ENCODE measurements at regions of chr22 and their contacts with region 1.

Region 1: GRCh38 chr22:22884010-22884887 is 3.4 kb upstream of the IGLL5 start:
- DNase-seq: peak; percentile 57 to 100 (median 78)
- ATAC-seq: peak; percentile 94
- H3K4me3 ChIP-seq: no peak overlapping the region
- H3K27ac ChIP-seq: no peak overlapping the region
- H3K4me1 ChIP-seq: peaks cover 0 to 9% of the 10 kb centered on the region in 2 experiments; a peak in 1 of 5 replicates
- H3K27me3 ChIP-seq: peaks cover 0 to 46% of the 10 kb centered on the region in 2 experiments; a peak in 2 of 5 replicates
- CTCF ChIP-seq: no peak
- EP300 ChIP-seq: no peak
- POLR2A ChIP-seq: no peak
- RAD21 ChIP-seq: no peak

Region 2: GRCh38 chr22:22422629-22423112 is 461.6 kb before region 1 on chr22:
- CTCF ChIA-PET with region 1: interaction called, 6 read pairs
- POLR2A ChIA-PET with region 1: interaction called, 5 read pairs
- in situ Hi-C with region 1: no loop called
- intact Hi-C with region 1: loop called (anchors 5 kb)
- DNase-seq: peak; percentile 85 to 96 (median 89)
- ATAC-seq: peak; percentile 92
- H3K4me3 ChIP-seq: no peak overlapping the region
- H3K27ac ChIP-seq: no peak overlapping the region
- H3K4me1 ChIP-seq: no peaks in the 10 kb centered on the region
- H3K27me3 ChIP-seq: peaks cover 31 to 34% of the 10 kb centered on the region in 2 experiments
- CTCF ChIP-seq: peak in 1 of 3 experiments; percentile 99; a peak in 2 of 6 replicates
- EP300 ChIP-seq: no peak
- POLR2A ChIP-seq: no peak
- RAD21 ChIP-seq: no peak

Region 3: GRCh38 chr22:22710719-22711531 is 173.3 kb before region 1 on chr22:
- CTCF ChIA-PET with region 1: interaction called, 28 read pairs
- POLR2A ChIA-PET with region 1: interaction called, 8 read pairs
- in situ Hi-C with region 1: no loop called
- intact Hi-C with region 1: loop called (anchors 1 kb)
- DNase-seq: peak; percentile 93 to 100 (median 99)
- ATAC-seq: peak; percentile 88
- H3K4me3 ChIP-seq: no peak overlapping the region
- H3K27ac ChIP-seq: no peak overlapping the region
- H3K4me1 ChIP-seq: no peaks in the 10 kb centered on the region
- H3K27me3 ChIP-seq: peaks cover 3 to 20% of the 10 kb centered on the region in 2 experiments; a peak in 2 of 5 replicates
- CTCF ChIP-seq: no peak
- EP300 ChIP-seq: no peak
- POLR2A ChIP-seq: no peak
- RAD21 ChIP-seq: no peak

Region 4: DNA sequence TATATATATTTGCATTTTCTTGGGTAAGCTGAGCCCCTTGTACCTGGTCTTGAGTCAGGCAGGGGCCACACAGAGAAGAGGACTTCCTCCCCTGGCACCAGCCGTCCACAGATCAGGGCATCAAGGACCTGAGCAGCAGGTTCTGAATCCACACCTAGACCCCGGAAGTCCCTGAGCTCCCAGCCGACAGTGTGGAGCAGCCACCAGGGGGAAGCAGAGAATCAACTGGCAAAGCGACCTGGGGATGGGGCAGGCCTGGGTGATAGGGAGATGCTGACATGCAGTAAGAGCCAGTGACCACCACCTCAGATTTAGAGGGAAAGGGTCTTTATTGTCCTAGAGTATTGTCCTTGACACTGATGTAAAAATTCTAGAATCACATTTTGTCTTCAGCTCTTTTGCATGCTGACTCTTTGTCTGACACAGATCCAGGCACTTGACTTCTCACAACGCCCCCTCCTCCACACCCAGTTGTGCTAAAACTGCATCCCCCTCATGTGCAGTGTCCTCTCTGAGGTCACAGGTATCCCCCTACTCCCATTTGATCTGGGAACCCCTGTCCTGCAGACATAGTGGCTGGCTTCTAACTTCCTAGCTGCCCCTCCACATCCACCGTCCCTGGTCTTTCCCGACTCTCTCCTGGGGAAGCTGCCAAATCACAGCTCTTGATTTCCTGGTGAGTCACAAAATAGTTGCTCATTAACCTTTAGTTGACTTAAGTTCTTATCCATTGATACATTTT is 130.6 kb before region 1 on chr22:
- CTCF ChIA-PET with region 1: interaction called, 23 read pairs
- POLR2A ChIA-PET with region 1: interaction called, 16 read pairs
- in situ Hi-C with region 1: no loop called
- intact Hi-C with region 1: loop called (anchors 1 kb)
- DNase-seq: peak; percentile 96 to 100 (median 100)
- ATAC-seq: peak; percentile 97
- H3K4me3 ChIP-seq: no peak overlapping the region
- H3K27ac ChIP-seq: no peak overlapping the region
- H3K4me1 ChIP-seq: no peaks in the 10 kb centered on the region
- H3K27me3 ChIP-seq: peaks cover 2 to 20% of the 10 kb centered on the region in 2 experiments; a peak in 3 of 5 replicates
- CTCF ChIP-seq: peak in 1 of 3 experiments; percentile 100; a peak in 2 of 6 replicates
- EP300 ChIP-seq: no peak; the same call in 1 of the 2 replicates
- POLR2A ChIP-seq: no peak
- RAD21 ChIP-seq: peak in 1 of 2 experiments; percentile 98; a peak in 2 of 4 replicates

Region 5: DNA sequence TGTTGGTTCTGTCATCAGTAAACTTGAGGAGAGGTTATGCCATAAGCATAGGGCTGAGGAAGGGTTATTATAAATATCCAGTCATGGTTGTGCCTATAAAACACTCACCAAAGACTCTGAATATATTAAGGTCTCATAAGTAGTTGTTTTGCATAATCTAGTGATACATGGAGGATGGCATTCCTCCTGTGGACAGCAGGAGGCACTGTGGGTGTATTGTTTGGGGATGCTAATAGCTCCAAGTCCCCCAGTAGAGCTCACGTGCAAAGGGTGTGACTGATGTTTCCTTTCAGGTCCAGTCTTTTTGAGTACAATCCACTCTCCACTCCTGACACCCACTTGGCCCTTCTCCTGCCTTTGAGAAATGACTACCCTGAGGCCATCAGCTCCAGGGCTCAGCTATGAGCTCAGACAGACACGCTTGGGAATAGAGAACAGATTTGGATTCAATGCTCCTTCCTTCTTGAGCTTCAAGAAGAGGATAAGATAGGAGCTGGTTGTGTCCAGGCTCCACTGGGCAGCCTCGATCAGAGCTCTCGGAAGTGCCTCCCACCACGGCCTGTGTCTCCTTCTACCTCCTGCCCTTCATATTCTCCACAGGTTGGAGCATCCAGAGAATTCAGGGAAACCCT is 81.8 kb before region 1 on chr22:
- CTCF ChIA-PET with region 1: interaction called, 251 read pairs
- POLR2A ChIA-PET with region 1: interaction called, 12 read pairs
- in situ Hi-C with region 1: no loop called
- intact Hi-C with region 1: loop called (anchors 1 kb)
- DNase-seq: peak; percentile 84 to 94 (median 91)
- ATAC-seq: peak; percentile 90
- H3K4me3 ChIP-seq: no peak overlapping the region
- H3K27ac ChIP-seq: no peak overlapping the region
- H3K4me1 ChIP-seq: no peaks in the 10 kb centered on the region
- H3K27me3 ChIP-seq: peaks cover 8 to 37% of the 10 kb centered on the region in 2 experiments; a peak in 3 of 5 replicates
- CTCF ChIP-seq: no peak
- EP300 ChIP-seq: no peak
- POLR2A ChIP-seq: no peak
- RAD21 ChIP-seq: no peak

Region 6: DNA sequence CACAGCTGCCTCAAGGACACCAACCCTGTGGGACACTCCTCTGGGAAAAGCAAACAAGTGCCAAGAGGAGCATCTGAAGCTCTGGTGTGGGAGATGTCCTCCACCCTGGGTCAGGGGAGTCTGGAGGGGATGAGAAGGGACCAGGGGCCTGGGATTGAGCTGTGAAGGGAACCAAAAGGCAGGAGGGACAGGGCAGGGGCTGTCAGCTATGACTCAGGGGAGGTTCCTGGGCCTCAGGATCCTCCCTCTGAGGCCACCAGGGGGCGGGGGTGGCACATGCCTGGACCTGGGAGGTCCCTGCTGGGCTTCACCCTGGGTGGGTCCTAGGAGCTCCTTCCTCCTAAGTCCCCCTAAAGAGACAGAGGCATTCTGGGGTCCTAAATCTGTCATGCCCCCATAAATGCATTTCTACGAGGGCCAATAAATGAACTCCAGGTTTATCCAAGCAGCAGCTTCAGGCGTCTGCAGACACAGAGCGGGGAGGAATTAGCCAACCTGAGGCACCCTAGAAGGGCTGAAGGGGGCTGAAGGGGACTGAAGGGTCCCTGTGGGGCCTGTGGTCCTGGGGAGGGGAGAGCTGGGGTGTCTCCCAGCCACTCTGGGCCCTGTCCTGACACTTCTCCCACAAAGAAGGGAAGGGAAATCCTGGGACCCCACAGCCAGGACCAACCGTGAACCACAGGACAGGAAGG is 28.5 kb before region 1 on chr22:
- CTCF ChIA-PET with region 1: interaction called, 90 read pairs
- POLR2A ChIA-PET with region 1: interaction called, 17 read pairs
- in situ Hi-C with region 1: no loop called
- intact Hi-C with region 1: loop called (anchors 1 kb)
- DNase-seq: peak; percentile 93 to 100 (median 98)
- ATAC-seq: peak; percentile 98
- H3K4me3 ChIP-seq: no peak overlapping the region
- H3K27ac ChIP-seq: no peak overlapping the region
- H3K4me1 ChIP-seq: no peaks in the 10 kb centered on the region
- H3K27me3 ChIP-seq: peaks cover 22 to 38% of the 10 kb centered on the region in 2 experiments
- CTCF ChIP-seq: no peak
- EP300 ChIP-seq: no peak
- POLR2A ChIP-seq: no peak
- RAD21 ChIP-seq: no peak

Region 7: DNA sequence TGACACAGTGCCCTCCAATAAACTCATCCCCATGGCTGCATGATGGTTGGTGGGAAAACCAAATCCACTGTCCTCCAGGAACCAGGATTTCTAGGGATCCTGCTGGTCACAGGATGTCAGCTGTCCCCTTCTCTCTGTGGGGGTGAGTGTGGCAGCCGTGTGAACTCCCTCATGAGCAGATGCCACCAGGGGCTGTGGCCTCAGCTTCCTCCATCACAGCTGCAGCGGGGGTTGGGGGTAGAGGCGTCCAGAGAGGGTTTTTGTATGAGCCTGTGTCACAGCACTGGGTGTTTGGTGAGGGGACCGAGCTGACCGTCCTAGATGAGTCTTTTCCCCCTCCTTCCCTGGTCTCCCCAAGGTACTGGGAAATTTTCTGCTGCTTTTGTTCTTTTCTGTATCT is 29.7 kb after region 1 on chr22:
- CTCF ChIA-PET with region 1: no interaction called
- POLR2A ChIA-PET with region 1: interaction called, 17 read pairs
- in situ Hi-C with region 1: no loop called
- intact Hi-C with region 1: loop called (anchors 2 kb)
- DNase-seq: peak in 1 of 4 experiments; percentile 48
- ATAC-seq: no peak
- H3K4me3 ChIP-seq: no peak overlapping the region
- H3K27ac ChIP-seq: no peak overlapping the region
- H3K4me1 ChIP-seq: no peaks in the 10 kb centered on the region
- H3K27me3 ChIP-seq: peaks cover 30 to 96% of the 10 kb centered on the region in 2 experiments
- CTCF ChIP-seq: no peak
- EP300 ChIP-seq: no peak
- POLR2A ChIP-seq: no peak
- RAD21 ChIP-seq: no peak